GM18951 (cell line): ENCODE measurements at regions of chr3 and their contacts with region 1.

Region 1: DNA sequence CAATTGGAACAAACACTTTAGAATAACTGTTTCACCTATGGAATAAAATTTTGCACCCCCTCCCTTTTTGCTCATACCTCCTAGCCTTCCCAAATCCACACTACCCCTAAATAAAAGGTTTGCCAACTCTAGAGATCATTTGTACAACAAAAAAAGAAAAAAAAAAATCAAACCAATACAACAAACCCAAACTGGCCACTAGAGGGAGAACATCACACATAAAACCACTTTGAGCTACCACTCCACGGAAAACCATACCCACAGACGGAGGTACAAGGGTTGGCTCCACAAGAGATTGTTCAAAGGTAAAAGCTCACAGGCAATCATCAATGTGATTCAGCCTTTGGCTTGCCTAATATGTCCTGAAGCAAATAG is 47.6 kb downstream of the SETMAR start:
- POLR2A ChIP-seq: no peak

Region 2: GRCh38 chr3:4644951-4645350 is 294.2 kb after region 1 on chr3:
- in situ Hi-C with region 1: loop called (anchors 10 kb)
- POLR2A ChIP-seq: no peak